Activated CD4-positive, alpha-beta memory T cell treated with anti-CD3 and anti-CD28 coated beads for 36 hours (primary cell): ENCODE measurements at regions of chr10 and their contacts with region 1.

Region 1: DNA sequence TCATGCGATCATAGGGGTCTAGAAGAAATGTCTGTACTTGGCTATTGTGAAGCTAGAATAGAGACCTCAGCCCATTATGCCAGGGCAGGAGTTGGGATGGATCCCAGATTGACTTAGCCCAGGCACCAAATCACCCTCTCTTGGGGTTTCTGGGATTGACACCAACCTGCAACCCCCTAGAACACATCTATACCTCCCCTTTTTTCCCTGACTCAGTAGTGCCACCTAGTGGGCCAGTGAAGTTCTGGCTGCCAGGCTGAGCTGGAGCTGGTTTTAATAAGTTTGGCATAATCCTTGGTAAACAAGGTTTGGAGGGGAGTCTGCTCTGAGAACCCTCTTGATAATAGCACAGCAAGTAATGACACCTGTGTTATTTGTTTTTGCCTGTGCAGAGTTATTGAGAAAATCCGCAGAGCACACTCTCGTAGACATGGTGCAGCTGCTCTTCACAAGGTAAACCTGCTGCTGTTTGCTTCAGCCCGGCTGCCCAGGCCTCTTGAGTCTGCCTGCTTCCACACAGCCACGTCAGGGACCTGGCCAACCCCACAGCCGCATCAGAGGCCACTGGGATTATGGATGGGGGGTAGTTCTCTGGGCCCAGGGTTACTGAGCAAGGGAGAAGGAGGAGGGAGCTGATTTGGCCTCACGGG is 43.3 kb upstream of the NFKB2 start:
- DNase-seq: peak; percentile 77
- H3K4me3 Mint-ChIP-seq: no peak overlapping the region
- H3K27ac Mint-ChIP-seq: no peak overlapping the region
- H3K4me1 Mint-ChIP-seq: peaks cover 4% of the 10 kb centered on the region
- H3K27me3 Mint-ChIP-seq: no peaks in the 10 kb centered on the region

Region 2: GRCh38 chr10:102040305-102041050 is 311.7 kb before region 1 on chr10:
- CTCF ChIA-PET with region 1: no interaction called
- POLR2A ChIA-PET with region 1: no interaction called
- intact Hi-C with region 1: no loop called
- DNase-seq: no peak
- H3K4me3 Mint-ChIP-seq: no peak overlapping the region
- H3K27ac Mint-ChIP-seq: no peak overlapping the region
- H3K4me1 Mint-ChIP-seq: peaks cover 15% of the 10 kb centered on the region
- H3K27me3 Mint-ChIP-seq: no peaks in the 10 kb centered on the region

Region 3: DNA sequence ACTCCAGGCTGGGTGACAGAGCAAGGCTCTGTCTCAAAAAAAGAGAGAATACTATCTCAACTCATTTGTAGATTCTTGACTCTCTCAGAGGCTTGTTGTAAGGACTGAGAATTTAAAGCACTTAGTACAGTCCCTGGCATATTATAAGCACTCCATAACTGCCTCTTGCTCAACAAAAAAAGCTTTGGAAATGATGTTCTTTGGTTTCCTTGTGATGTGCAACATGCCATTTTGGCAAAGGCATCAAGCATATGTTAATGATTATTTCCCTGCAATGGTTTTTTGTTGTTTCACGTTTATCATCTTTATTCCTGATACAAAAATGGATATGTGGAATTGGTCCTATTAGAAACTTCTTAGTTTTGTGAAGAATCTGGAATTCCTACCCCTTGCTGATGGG is 184.3 kb before region 1 on chr10:
- CTCF ChIA-PET with region 1: interaction called, 76 read pairs
- POLR2A ChIA-PET with region 1: no interaction called
- intact Hi-C with region 1: loop called (anchors 1 kb)
- DNase-seq: no peak
- H3K4me3 Mint-ChIP-seq: no peak overlapping the region
- H3K27ac Mint-ChIP-seq: no peak overlapping the region
- H3K4me1 Mint-ChIP-seq: peaks cover 5% of the 10 kb centered on the region
- H3K27me3 Mint-ChIP-seq: no peaks in the 10 kb centered on the region

Region 4: DNA sequence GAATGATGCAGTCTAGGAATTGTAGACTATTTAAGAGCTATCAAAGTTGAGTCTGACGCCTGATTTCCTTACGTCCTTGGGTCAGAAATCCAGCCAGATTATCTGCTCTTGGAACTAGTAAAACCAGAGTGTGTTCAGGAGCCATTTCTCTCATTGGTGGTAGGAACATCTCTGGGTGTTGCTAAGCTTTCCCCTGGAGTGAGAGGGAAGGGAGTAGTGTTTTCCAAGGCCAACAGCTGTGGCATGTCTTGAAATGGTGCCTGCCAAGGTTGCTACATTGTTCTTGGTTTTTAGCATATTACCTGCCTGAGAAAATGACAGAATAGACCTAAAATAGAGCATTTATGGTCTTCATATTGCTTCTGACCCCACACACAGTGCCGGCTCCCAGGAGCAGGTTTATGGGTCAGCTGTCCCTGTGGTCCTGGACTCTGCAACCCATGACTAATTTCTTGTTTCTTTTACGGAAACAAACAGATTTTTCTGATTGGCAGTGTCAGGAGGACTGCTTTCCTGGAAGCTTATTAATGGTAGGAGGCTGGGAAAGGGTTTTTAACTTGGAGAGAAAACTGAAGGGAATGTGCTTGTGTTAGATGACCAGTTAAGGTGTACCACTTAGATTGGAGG is 89.3 kb before region 1 on chr10:
- CTCF ChIA-PET with region 1: interaction called, 38 read pairs
- POLR2A ChIA-PET with region 1: no interaction called
- intact Hi-C with region 1: no loop called
- DNase-seq: no peak
- H3K4me3 Mint-ChIP-seq: no peak overlapping the region
- H3K27ac Mint-ChIP-seq: no peak overlapping the region
- H3K4me1 Mint-ChIP-seq: peaks cover 56% of the 10 kb centered on the region
- H3K27me3 Mint-ChIP-seq: no peaks in the 10 kb centered on the region

Region 5: DNA sequence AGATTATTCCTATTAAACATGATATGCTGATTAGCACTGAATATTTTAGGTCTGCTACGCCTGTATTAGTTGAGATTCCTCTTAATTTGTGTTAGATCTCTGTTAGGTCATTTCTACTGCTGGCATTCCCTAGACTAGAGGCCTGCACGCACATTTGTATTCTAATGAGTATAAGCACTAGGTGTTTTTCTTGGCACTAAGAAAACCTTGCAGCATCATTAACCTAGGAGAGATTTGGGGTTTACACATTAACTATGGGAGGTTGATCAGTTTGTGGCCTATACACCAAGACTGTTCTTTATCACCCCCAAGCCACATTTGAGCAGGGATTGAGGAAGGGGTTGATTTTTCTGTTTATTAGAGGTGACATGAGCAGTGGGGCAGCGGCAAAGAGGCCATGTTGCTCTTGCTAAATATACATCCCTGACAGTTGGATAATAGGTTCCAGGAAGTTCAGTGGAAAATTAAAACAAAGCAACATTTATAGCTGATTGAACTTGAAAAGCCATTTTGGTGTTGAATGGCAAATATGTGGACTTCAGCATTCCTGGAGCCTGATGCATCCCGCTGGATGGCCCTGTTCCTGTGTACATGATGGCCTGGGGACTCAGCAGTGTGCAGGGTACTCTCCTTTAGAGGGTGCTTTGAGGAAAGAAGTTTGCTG is 41.7 kb before region 1 on chr10:
- CTCF ChIA-PET with region 1: interaction called, 67 read pairs
- POLR2A ChIA-PET with region 1: no interaction called
- intact Hi-C with region 1: no loop called
- DNase-seq: no peak
- H3K4me3 Mint-ChIP-seq: no peak overlapping the region
- H3K27ac Mint-ChIP-seq: no peak overlapping the region
- H3K4me1 Mint-ChIP-seq: peaks cover 56% of the 10 kb centered on the region
- H3K27me3 Mint-ChIP-seq: no peaks in the 10 kb centered on the region

Region 6: GRCh38 chr10:102368072-102368471 is 15.9 kb after region 1 on chr10:
- CTCF ChIA-PET with region 1: interaction called, 57 read pairs
- POLR2A ChIA-PET with region 1: no interaction called
- intact Hi-C with region 1: no loop called
- DNase-seq: no peak
- H3K4me3 Mint-ChIP-seq: no peak overlapping the region
- H3K27ac Mint-ChIP-seq: no peak overlapping the region
- H3K4me1 Mint-ChIP-seq: no peaks in the 10 kb centered on the region
- H3K27me3 Mint-ChIP-seq: no peaks in the 10 kb centered on the region

Region 7: GRCh38 chr10:102476466-102477141 is 124.4 kb after region 1 on chr10:
- CTCF ChIA-PET with region 1: interaction called, 14 read pairs
- POLR2A ChIA-PET with region 1: no interaction called
- intact Hi-C with region 1: no loop called
- DNase-seq: no peak
- H3K4me3 Mint-ChIP-seq: no peak overlapping the region
- H3K27ac Mint-ChIP-seq: peak overlapping the region; percentile 65
- H3K4me1 Mint-ChIP-seq: peaks cover 21% of the 10 kb centered on the region
- H3K27me3 Mint-ChIP-seq: no peaks in the 10 kb centered on the region